HAP-1 (cell line): ENCODE measurements at regions of chr1 and their contacts with region 1.

Region 1: DNA sequence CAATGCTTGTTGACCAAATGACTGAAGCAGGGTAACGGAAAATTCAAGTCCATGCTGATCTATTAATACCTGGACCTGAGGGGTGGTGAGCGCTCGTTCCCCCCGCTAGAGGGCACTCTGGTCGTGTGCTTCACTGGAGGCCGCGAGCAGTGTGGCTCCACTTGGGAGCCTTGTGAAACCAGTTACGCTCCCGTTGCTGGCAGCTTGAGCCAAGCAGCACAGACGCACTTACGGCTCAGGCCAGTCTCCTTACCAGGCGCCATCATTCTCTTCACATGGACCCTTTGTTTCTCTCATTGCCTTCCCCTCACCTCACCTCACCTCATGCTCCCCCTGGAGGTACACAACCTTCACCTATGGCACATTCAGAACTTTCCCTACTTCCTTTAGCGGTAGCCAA is 49.7 kb upstream of the TSPAN2 start:
- DNase-seq: peak; percentile 55 to 82
- H3K4me3 ChIP-seq: no peak overlapping the region
- H3K4me1 ChIP-seq: no peaks in the 10 kb centered on the region
- H3K27me3 ChIP-seq: no peaks in the 10 kb centered on the region

Region 2: DNA sequence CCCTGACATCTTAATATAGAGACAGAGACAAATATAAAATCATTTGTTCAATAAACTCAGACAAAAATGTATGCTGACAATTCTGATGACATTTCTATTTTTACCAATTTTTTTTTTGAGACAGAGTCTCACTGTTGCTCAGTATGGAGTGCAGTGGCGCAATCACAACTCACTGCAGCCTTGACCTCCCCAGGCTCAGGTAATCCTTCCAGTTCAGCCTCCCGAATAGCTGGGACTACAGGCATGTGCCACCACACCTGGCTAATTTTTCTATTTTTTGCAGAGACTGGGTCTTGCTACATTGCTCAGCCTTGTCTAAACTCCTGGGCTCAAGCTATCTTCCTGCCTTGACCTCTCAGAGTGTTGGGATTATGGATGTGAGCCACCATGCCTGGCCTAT is 344.9 kb before region 1 on chr1:
- in situ Hi-C with region 1: no loop called
- DNase-seq: no peak
- H3K4me3 ChIP-seq: no peak overlapping the region
- H3K4me1 ChIP-seq: no peaks in the 10 kb centered on the region
- H3K27me3 ChIP-seq: peaks cover 12% of the 10 kb centered on the region; the same call in 1 of the 2 replicates

Region 3: DNA sequence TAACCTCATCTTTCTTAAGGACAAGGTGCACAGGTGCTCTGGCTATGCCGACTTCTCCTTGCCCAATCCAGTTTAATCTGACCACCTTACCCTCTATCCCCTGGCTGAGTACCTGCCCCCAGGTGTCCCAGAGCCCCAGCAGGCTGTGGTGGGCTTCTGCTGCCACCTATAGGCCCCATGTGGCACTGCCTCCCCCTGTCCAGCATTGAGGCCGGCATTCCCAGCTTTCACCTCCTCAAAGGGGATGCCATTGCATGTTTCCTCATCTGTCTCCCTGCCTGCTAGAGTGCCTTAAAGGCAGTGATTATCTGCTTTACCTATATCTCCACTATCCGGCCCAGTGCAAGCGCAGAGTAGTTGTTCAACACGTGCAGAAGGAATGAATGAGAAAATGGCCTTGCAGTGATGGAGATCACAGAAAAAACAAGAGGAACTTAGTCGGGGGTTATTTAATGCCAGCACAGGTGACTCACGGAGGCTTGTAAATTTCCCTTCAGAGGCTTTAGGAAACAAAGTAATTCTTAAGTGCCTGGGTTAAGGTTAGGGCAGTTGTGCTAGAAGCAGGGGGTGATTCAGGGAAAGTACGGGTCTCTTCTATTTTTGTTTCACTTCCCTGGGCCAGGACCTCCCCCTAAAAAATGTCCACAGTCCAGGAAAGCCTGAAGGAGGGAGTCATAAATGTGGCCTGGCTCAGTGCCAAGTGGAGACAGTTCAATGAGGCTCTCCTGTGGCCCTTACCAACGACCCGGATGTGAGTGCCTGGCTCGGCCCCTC is 330.9 kb after region 1 on chr1:
- in situ Hi-C with region 1: loop called (anchors 5 kb)
- DNase-seq: peak; percentile 22 to 68
- H3K4me3 ChIP-seq: no peak overlapping the region
- H3K4me1 ChIP-seq: no peaks in the 10 kb centered on the region
- H3K27me3 ChIP-seq: peaks cover 3% of the 10 kb centered on the region; the same call in 1 of the 2 replicates

Region 4: DNA sequence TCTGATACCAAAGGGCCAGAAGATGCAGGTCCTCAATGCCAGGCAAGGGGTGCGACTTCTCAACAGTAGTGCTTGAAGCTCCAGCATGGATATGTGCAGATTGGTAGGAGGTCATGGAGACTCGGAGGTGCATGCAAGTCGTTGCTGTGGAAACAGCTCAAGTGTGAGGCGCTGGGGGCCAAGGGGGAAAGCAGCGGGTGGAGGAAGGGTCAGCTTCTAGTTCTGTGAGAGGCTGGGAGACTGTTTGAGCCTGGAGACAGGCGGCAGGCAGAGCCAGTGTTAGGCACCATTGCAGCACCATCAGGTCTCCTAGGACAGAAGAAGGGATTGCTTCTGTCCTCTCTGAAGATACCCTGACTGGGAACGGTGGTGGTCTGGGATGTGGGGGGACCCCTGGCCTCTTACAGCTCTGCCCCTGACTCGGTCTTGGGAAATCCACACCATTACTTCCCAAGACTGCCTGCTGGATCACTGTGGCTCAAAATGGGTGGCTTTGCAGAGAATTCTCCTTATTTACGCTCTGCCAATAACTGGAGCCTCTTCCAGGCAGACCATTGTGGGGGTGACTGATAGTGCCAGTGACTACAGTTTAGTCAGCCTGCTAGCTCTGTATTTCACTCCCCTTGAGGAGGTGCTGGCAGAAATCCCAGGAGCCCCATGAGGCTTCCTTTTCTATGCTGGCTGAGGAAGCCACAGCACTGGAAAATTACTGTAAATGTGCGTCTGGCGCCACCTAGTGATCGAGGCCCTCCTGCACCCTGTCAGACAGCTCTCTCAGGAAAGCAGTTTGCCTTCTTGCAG is 456.5 kb after region 1 on chr1:
- in situ Hi-C with region 1: loop called (anchors 5 kb)
- DNase-seq: peak; percentile 56 to 88
- H3K4me3 ChIP-seq: no peak overlapping the region
- H3K4me1 ChIP-seq: no peaks in the 10 kb centered on the region
- H3K27me3 ChIP-seq: no peaks in the 10 kb centered on the region; the same call in 1 of the 2 replicates

Region 5: DNA sequence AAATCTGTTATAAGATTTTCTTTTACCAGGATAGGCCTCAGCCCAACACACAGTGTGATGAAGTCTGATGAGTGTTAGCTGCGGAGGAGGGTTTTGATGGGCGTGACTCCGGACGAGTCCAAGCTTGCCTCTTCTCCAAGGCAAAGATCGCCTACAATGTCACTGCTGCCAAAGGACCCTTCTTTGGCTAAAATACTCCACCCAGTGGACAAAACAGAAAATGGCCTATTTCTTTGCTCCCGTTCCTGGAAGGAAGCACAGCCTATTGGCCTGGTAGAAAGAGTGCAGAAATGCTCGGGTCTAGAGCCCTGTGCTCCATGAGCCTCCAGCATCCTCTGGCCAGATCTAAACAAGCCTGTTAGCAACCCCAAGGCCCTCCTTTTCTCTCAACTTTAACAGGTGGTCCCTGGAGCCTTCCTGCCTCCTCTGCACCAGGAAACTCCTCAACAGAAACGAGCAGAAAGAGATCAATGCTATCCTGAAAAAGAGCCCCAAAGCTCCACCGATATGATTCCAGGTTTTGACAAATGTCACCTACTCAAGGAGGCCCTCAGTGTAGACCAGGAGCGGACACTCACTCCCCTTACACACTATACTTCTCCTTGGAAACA is 633.0 kb after region 1 on chr1:
- in situ Hi-C with region 1: loop called (anchors 25 kb)
- DNase-seq: peak; percentile 83 to 90
- H3K4me3 ChIP-seq: no peak overlapping the region
- H3K4me1 ChIP-seq: peaks cover 4% of the 10 kb centered on the region
- H3K27me3 ChIP-seq: no peaks in the 10 kb centered on the region